ENCODE measurements at regions of chr7 and their contacts with region 1.

Region 1: GRCh38 chr7:36670585-36671431 is 53.5 kb downstream of the AOAH start:
- DNase-seq: peak; percentile 58
- H3K4me3 ChIP-seq: no peak overlapping the region
- H3K27ac ChIP-seq: no peak overlapping the region
- H3K4me1 ChIP-seq: no peaks in the 10 kb centered on the region
- CTCF ChIP-seq: peak; percentile 88

Region 2: DNA sequence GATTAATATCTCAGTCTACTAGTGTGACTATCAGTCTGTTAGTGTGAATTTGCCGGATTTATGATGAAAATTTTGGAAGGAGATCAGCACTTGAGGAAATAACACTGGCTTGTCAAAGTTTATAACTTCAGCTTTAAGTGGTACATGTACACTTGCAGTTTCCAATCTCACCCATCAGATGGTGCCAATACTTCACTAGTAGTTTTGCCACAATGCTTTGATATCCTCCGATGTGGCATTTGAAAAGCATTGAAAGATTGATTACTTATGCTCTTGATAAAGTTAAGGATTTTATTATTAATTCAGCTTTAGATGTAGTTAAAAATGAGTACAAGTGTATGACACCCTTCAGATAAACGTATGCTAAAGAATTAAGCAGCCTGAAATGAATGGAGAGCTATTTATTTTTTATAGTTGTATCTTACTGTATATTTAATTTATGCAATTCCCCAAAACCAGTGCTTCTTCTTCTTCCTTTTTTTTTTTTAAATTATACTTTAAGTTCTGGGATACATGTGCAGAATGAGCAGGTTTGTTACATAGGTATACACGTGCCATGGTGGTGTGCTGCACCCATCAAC is 183.0 kb before region 1 on chr7:
- CTCF ChIA-PET with region 1: no interaction called
- POLR2A ChIA-PET with region 1: no interaction called
- intact Hi-C with region 1: loop called (anchors 5 kb)
- DNase-seq: peak; percentile 39
- H3K4me3 ChIP-seq: no peak overlapping the region
- H3K27ac ChIP-seq: no peak overlapping the region
- H3K4me1 ChIP-seq: no peaks in the 10 kb centered on the region
- CTCF ChIP-seq: peak; percentile 78

Measured in OCI-LY7 (cell line).